IMR-90 (cell line): ENCODE measurements at regions of chr12 and their contacts with region 1.

Region 1: DNA sequence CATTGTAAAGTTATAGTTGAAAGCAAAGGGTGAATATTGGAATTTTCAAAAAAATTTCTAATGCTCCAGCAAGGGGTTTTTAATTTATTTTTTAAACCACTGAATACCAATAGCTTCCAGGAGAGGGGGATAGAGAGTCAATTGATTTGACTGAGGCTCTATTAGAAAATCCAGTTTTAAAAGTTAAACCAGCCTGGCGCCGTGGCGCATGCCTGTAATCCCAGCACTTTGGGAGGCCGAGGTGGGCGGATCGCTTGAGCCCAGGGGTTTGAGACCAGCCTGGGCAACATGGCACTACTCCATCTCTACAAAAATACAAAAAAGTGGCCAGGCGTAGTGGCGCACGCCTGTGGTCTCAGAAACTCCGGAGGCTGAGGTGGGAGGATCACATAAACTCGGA is 150.1 kb downstream of the SLC38A4 start:
- DNase-seq: peak; percentile 44
- ATAC-seq: peak; percentile 60
- H3K4me3 ChIP-seq: no peak overlapping the region
- H3K27ac ChIP-seq: peak overlapping the region; percentile 15; the same call in 1 of the 2 replicates
- H3K4me1 ChIP-seq: peaks cover 3% of the 10 kb centered on the region
- H3K27me3 ChIP-seq: no peaks in the 10 kb centered on the region
- CTCF ChIP-seq: peak; percentile 64
- POLR2A ChIP-seq: no peak
- RAD21 ChIP-seq: peak; percentile 64

Region 2: DNA sequence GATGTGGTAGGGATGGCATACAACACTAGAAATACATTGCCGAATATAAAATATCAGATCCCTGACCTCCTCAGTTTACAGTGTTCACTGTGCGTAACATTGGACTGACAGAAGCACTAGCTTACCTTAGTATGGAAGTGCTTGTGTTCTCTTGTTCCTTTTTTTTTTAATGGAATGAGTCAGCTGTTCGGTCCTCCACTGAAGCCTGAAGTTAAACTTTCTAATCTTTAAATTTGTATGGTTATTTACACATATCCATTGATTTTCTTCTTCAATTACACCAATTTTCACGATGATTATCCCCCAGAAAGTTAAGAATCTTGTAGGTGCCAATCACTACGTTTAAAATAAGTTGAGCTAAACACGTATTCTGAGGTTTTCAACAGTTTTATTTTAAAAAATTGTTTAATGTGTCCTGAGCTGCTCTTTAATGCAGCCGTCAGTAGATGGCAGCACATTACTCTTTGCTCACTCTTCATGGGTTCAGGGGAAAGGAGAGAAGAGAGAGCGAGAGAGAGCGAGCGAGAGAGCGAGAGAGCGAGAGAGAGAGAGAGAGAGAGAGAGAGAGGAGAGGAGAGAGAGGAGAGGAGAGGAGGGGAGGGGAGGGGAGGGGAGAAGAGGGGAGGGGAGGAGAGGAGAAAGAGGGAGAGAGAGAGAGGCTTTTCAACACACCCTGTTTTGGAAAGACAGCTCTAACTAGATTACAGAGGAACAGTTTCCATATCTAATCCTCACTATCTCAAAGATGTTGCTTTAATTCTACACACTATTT is 550.7 kb before region 1 on chr12:
- CTCF ChIA-PET with region 1: interaction called, 4 read pairs
- POLR2A ChIA-PET with region 1: no interaction called
- dilution Hi-C with region 1: no loop called
- in situ Hi-C with region 1: no loop called
- intact Hi-C with region 1: loop called (anchors 10 kb)
- DNase-seq: peak; percentile 87
- ATAC-seq: peak; percentile 95
- H3K4me3 ChIP-seq: no peak overlapping the region
- H3K27ac ChIP-seq: no peak overlapping the region
- H3K4me1 ChIP-seq: peaks cover 5% of the 10 kb centered on the region
- H3K27me3 ChIP-seq: peaks cover 11% of the 10 kb centered on the region
- CTCF ChIP-seq: peak; percentile 75
- POLR2A ChIP-seq: no peak
- RAD21 ChIP-seq: peak; percentile 68

Region 3: GRCh38 chr12:46153268-46153872 is 522.4 kb before region 1 on chr12:
- CTCF ChIA-PET with region 1: no interaction called
- POLR2A ChIA-PET with region 1: no interaction called
- dilution Hi-C with region 1: no loop called
- in situ Hi-C with region 1: loop called (anchors 25 kb)
- intact Hi-C with region 1: no loop called
- DNase-seq: peak; percentile 52
- ATAC-seq: no peak
- H3K4me3 ChIP-seq: no peak overlapping the region
- H3K27ac ChIP-seq: no peak overlapping the region
- H3K4me1 ChIP-seq: no peaks in the 10 kb centered on the region
- H3K27me3 ChIP-seq: no peaks in the 10 kb centered on the region
- CTCF ChIP-seq: peak; percentile 79
- POLR2A ChIP-seq: no peak
- RAD21 ChIP-seq: peak; percentile 70

Region 4: DNA sequence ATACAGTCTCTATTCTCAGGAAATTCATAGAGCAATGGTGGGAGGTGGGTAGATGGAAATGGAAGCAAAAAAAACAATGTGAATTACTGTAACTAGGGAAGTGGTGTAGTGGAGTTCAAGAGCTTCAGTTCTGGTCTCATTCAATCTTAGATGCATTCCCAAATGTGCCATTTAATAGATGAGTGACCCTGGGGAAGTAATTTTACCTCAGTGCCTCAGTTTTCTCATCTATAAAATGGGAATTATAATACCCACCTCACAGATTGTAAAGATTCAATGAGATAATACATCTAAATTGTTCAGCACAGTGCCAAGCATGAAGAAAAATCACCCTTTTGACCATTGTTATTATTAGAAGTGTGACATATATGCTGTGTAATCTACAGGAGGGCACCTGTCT is 23.0 kb before region 1 on chr12:
- CTCF ChIA-PET with region 1: no interaction called
- POLR2A ChIA-PET with region 1: no interaction called
- dilution Hi-C with region 1: no loop called
- in situ Hi-C with region 1: no loop called
- intact Hi-C with region 1: no loop called
- DNase-seq: no peak
- ATAC-seq: no peak
- H3K4me3 ChIP-seq: no peak overlapping the region
- H3K27ac ChIP-seq: no peak overlapping the region
- H3K4me1 ChIP-seq: peaks cover 4% of the 10 kb centered on the region; the same call in 1 of the 2 replicates
- H3K27me3 ChIP-seq: no peaks in the 10 kb centered on the region
- CTCF ChIP-seq: no peak
- POLR2A ChIP-seq: no peak
- RAD21 ChIP-seq: no peak